Heart left ventricle (tissue), 16 donors: ENCODE measurements at regions of chr1 and their contacts with region 1.

Region 1: GRCh38 chr1:206912445-206913095 is 9.2 kb downstream of the FCMR start:
- DNase-seq: peak in 4 of 5 donors; percentile 50 to 73 (median 64)
- ATAC-seq: peak; percentile 60 to 76 (median 64)
- H3K4me3 ChIP-seq: no peak overlapping the region
- H3K27ac ChIP-seq: no peak overlapping the region
- H3K4me1 ChIP-seq: peaks cover 0 to 25% (median 11%) of the 10 kb centered on the region in 12 donors
- H3K27me3 ChIP-seq: peaks cover 0 to 28% (median 10%) of the 10 kb centered on the region in 9 donors
- CTCF ChIP-seq: peak; percentile 75 to 88 (median 86)
- POLR2A ChIP-seq: no peak

Region 2: GRCh38 chr1:206556750-206557635 is 355.6 kb before region 1 on chr1:
- intact Hi-C with region 1: no loop called
- DNase-seq: peak; percentile 82 to 94 (median 88)
- ATAC-seq: peak in 3 of 4 donors; percentile 76 to 77 (median 76)
- H3K4me3 ChIP-seq: peak overlapping the region; percentile 48 to 81 (median 64)
- H3K27ac ChIP-seq: peak overlapping the region; percentile 5 to 98 (median 69)
- H3K4me1 ChIP-seq: peaks cover 5 to 70% (median 48%) of the 10 kb centered on the region in 12 donors
- H3K27me3 ChIP-seq: no peaks in the 10 kb centered on the region
- CTCF ChIP-seq: peak in 3 of 12 donors; percentile 7 to 19 (median 7)
- POLR2A ChIP-seq: no peak

Region 3: GRCh38 chr1:206612129-206612876 is 300.3 kb before region 1 on chr1 and contains the start of gene EIF2D:
- intact Hi-C with region 1: loop called in 4 of 10 experiments (anchors 5 kb)
- DNase-seq: peak; percentile 94 to 99 (median 96)
- ATAC-seq: peak; percentile 99
- H3K4me3 ChIP-seq: peak within 1 kb of the TSS; percentile 56 to 92 (median 78)
- H3K27ac ChIP-seq: peak within 1 kb of the TSS; percentile 63 to 90 (median 86)
- H3K4me1 ChIP-seq: peaks cover 0 to 13% (median 8%) of the 10 kb centered on the region in 12 donors
- H3K27me3 ChIP-seq: no peaks in the 10 kb centered on the region
- CTCF ChIP-seq: peak; percentile 94 to 100 (median 98)
- POLR2A ChIP-seq: peak in 1 of 2 donors; percentile 58
- total RNA-seq, gene EIF2D: 21.6 to 37.5 (median 29.0) TPM

Region 4: GRCh38 chr1:206725109-206725963 is 187.2 kb before region 1 on chr1:
- intact Hi-C with region 1: loop called in 7 of 10 experiments (anchors 2 to 5 kb)
- DNase-seq: peak in 1 of 5 donors; percentile 65
- ATAC-seq: no peak
- H3K4me3 ChIP-seq: no peak overlapping the region
- H3K27ac ChIP-seq: peak overlapping the region in 9 of 12 donors; percentile 14 to 95 (median 84)
- H3K4me1 ChIP-seq: peaks cover 14 to 89% (median 80%) of the 10 kb centered on the region in 12 donors
- H3K27me3 ChIP-seq: no peaks in the 10 kb centered on the region
- CTCF ChIP-seq: peak in 11 of 12 donors; percentile 30 to 66 (median 56)
- POLR2A ChIP-seq: no peak

Region 5: DNA sequence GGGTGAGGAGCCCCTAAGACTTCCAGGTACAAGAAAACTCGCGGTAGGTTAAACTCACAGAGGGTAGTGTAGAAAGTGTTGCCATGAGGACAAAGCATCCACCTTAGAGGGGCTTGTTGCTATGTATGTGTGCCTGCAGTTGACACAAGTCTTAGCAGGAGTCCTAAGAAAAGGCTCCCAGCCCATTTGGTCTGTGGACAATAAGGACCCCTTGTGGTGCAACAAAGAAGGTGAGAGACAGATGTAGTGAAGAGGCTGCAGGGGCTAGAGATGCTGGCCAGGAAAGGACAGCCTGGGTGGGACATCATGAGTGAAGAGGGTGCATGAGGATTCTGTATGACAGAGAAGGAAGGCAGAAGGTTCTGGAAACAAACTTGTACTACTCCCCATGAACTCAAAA is 104.0 kb before region 1 on chr1:
- intact Hi-C with region 1: loop called (anchors 2 to 10 kb)
- DNase-seq: no peak
- ATAC-seq: peak; percentile 51 to 80 (median 78)
- H3K4me3 ChIP-seq: no peak overlapping the region
- H3K27ac ChIP-seq: no peak overlapping the region
- H3K4me1 ChIP-seq: peaks cover 0 to 18% (median 0%) of the 10 kb centered on the region in 12 donors
- H3K27me3 ChIP-seq: no peaks in the 10 kb centered on the region
- CTCF ChIP-seq: peak; percentile 15 to 54 (median 38)
- POLR2A ChIP-seq: no peak

Region 6: DNA sequence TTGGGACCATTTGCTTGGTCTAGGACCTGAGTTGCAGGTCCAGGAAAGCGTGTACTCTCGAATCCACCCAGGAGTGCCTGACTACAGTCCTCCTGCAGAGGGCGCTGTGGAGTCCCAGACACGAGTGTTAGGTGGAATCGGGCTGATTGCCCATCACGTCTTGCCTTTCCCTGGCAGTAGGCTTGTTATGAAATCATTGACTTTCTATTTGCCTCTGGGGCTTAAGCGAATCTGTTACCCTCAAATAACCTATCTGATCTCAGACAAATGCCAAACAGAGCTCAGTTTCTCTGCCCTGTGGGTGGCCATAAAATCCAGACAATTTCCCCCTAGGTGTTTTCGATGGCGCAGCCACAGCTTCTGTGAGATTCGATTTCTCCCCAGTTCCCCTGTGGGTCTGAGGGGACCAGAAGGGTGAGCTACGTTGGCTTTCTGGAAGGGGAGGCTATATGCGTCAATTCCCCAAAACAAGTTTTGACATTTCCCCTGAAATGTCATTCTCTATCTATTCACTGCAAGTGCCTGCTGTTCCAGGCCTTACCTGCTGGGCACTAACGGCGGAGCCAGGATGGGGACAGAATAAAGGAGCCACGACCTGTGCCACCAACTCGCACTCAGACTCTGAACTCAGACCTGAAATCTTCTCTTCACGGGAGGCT is 47.4 kb before region 1 on chr1 and contains the start of gene IL20:
- intact Hi-C with region 1: loop called in 6 of 10 experiments (anchors 2 to 5 kb)
- DNase-seq: peak; percentile 64 to 84 (median 78)
- ATAC-seq: peak; percentile 69 to 86 (median 80)
- H3K4me3 ChIP-seq: no peak within 1 kb of the TSS
- H3K27ac ChIP-seq: no peak within 1 kb of the TSS
- H3K4me1 ChIP-seq: peaks cover 0 to 4% (median 0%) of the 10 kb centered on the region in 12 donors
- H3K27me3 ChIP-seq: peaks cover 0 to 18% (median 0%) of the 10 kb centered on the region in 9 donors
- CTCF ChIP-seq: peak; percentile 58 to 79 (median 65)
- POLR2A ChIP-seq: no peak
- total RNA-seq, gene IL20: not detected

Region 7: DNA sequence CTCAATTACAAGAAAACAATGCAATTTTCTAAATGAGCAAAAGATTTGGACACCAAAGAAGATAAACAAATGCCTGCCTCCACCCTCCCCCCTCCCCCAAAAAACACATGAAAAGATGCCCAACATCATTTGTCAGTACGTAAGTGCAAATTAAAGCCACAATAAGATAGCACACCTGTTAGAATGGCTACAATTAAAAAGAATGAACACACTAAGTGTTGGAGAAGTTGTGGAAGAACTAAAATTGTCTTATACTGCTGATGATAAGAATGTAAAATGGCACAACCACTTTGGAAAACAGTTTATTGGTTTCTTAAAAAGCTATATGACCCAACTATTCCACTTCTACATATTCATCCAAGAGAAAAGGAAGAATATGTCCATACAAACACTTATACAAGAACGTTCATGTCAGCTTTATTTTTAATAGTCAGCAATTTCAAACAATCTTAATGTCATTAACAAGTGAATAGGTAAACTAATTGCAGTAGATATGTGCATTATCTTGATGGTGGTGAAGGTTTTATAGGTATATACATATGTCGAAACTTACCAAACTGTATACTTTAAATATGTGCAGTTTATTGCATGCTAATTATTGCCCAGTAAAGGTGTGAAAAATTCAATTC is 36.7 kb before region 1 on chr1:
- intact Hi-C with region 1: no loop called
- DNase-seq: no peak
- ATAC-seq: no peak
- H3K4me3 ChIP-seq: no peak overlapping the region
- H3K27ac ChIP-seq: no peak overlapping the region
- H3K4me1 ChIP-seq: peaks cover 0 to 3% (median 0%) of the 10 kb centered on the region in 12 donors
- H3K27me3 ChIP-seq: no peaks in the 10 kb centered on the region
- CTCF ChIP-seq: no peak
- POLR2A ChIP-seq: no peak